Caco-2 (cell line): ENCODE measurements at regions of chr12 and their contacts with region 1.

Region 1: GRCh38 chr12:40375076-40375475 is 150.3 kb downstream of the LRRK2 start:
- DNase-seq: peak in 1 of 2 experiments; percentile 6
- H3K4me3 ChIP-seq: no peak overlapping the region
- H3K4me3 Mint-ChIP-seq: no peak overlapping the region
- H3K27ac Mint-ChIP-seq: no peak overlapping the region
- H3K4me1 ChIP-seq: no peaks in the 10 kb centered on the region
- H3K4me1 Mint-ChIP-seq: no peaks in the 10 kb centered on the region
- H3K27me3 ChIP-seq: no peaks in the 10 kb centered on the region
- H3K27me3 Mint-ChIP-seq: no peaks in the 10 kb centered on the region
- CTCF ChIP-seq: peak; percentile 27 to 29

Region 2: GRCh38 chr12:40152783-40153383 is 222.2 kb before region 1 on chr12:
- CTCF ChIA-PET with region 1: no interaction called
- POLR2A ChIA-PET with region 1: no interaction called
- intact Hi-C with region 1: loop called (anchors 5 kb)
- DNase-seq: peak; percentile 41 to 57
- H3K4me3 ChIP-seq: no peak overlapping the region
- H3K4me3 Mint-ChIP-seq: no peak overlapping the region
- H3K27ac Mint-ChIP-seq: no peak overlapping the region
- H3K4me1 ChIP-seq: no peaks in the 10 kb centered on the region
- H3K4me1 Mint-ChIP-seq: no peaks in the 10 kb centered on the region
- H3K27me3 ChIP-seq: no peaks in the 10 kb centered on the region
- H3K27me3 Mint-ChIP-seq: no peaks in the 10 kb centered on the region
- CTCF ChIP-seq: peak; percentile 83 to 86

Region 3: DNA sequence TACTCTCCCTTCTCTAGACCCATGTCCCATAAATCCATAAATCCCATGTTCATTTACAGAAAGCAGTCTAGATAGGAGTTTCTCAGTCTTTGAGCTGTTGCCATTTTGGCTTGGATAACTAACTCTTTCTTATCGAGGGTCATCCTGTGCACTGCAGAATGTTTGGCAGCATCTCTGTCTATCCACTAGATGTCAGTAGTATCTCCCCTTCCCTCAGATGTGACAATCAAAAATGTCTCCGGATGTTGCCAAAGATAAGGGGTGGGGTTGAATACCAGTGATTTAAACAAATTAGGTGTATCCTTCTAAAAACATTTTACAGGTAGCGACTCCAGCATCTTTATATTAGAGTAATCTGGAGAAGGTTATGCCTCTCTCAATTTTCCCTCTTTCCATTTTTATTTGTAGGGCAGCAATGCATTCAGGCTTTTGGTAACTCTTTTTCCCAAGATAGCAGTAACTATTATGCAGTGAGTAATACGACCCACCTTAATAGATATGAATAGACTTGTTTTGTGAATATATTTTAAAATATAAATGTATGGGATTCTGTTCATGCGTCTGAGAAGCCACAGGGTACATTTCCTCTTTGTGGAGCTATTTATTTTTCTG is 49.6 kb before region 1 on chr12:
- CTCF ChIA-PET with region 1: no interaction called
- POLR2A ChIA-PET with region 1: no interaction called
- intact Hi-C with region 1: loop called (anchors 1 kb)
- DNase-seq: peak; percentile 34 to 40
- H3K4me3 ChIP-seq: no peak overlapping the region
- H3K4me3 Mint-ChIP-seq: no peak overlapping the region
- H3K27ac Mint-ChIP-seq: no peak overlapping the region
- H3K4me1 ChIP-seq: peaks cover 6% of the 10 kb centered on the region
- H3K4me1 Mint-ChIP-seq: no peaks in the 10 kb centered on the region
- H3K27me3 ChIP-seq: no peaks in the 10 kb centered on the region
- H3K27me3 Mint-ChIP-seq: peaks cover 3% of the 10 kb centered on the region
- CTCF ChIP-seq: peak; percentile 39 to 82

Region 4: GRCh38 chr12:40464121-40464520 is 89.0 kb after region 1 on chr12:
- CTCF ChIA-PET with region 1: no interaction called
- POLR2A ChIA-PET with region 1: no interaction called
- intact Hi-C with region 1: no loop called
- DNase-seq: no peak
- H3K4me3 ChIP-seq: no peak overlapping the region
- H3K4me3 Mint-ChIP-seq: no peak overlapping the region
- H3K27ac Mint-ChIP-seq: no peak overlapping the region
- H3K4me1 ChIP-seq: no peaks in the 10 kb centered on the region
- H3K4me1 Mint-ChIP-seq: no peaks in the 10 kb centered on the region
- H3K27me3 ChIP-seq: no peaks in the 10 kb centered on the region
- H3K27me3 Mint-ChIP-seq: peaks cover 6% of the 10 kb centered on the region
- CTCF ChIP-seq: no peak